ENCODE measurements at regions of chr1 and their contacts with region 1.

Region 1: GRCh38 chr1:217348960-217349664 is 281.8 kb downstream of the GPATCH2 start:
- DNase-seq: no peak
- ATAC-seq: no peak
- H3K4me3 Mint-ChIP-seq: no peak overlapping the region
- H3K27ac Mint-ChIP-seq: no peak overlapping the region
- H3K4me1 Mint-ChIP-seq: peaks cover 9% of the 10 kb centered on the region
- H3K27me3 Mint-ChIP-seq: peaks cover under 1% of the 10 kb centered on the region
- CTCF ChIP-seq: no peak

Region 2: GRCh38 chr1:217333939-217334338 is 15.2 kb before region 1 on chr1:
- CTCF ChIA-PET with region 1: interaction called, 19 read pairs
- POLR2A ChIA-PET with region 1: no interaction called
- DNase-seq: peak; percentile 73
- ATAC-seq: peak; percentile 97
- H3K4me3 Mint-ChIP-seq: no peak overlapping the region
- H3K27ac Mint-ChIP-seq: no peak overlapping the region
- H3K4me1 Mint-ChIP-seq: peaks cover 12% of the 10 kb centered on the region
- H3K27me3 Mint-ChIP-seq: no peaks in the 10 kb centered on the region; the same call in 1 of the 2 replicates
- CTCF ChIP-seq: peak; percentile 59; the same call in 1 of the 2 replicates

Region 3: GRCh38 chr1:217431393-217431792 is 82.3 kb after region 1 on chr1:
- CTCF ChIA-PET with region 1: no interaction called
- POLR2A ChIA-PET with region 1: no interaction called
- DNase-seq: no peak
- ATAC-seq: peak; percentile 48; the same call in 1 of the 2 replicates
- H3K4me3 Mint-ChIP-seq: no peak overlapping the region
- H3K27ac Mint-ChIP-seq: peak overlapping the region; percentile 28; the same call in 1 of the 2 replicates
- H3K4me1 Mint-ChIP-seq: peaks cover 13% of the 10 kb centered on the region
- H3K27me3 Mint-ChIP-seq: 0 out of 2 replicates have a peak, but pooled peaks cover 2% of the 10 kb centered on the region
- CTCF ChIP-seq: no peak